ENCODE measurements at regions of chr1 and their contacts with region 1.

Region 1: GRCh38 chr1:236018885-236019453 is 45.9 kb downstream of the NID1 start:
- DNase-seq: peak; percentile 84 to 92 (median 86)
- ATAC-seq: peak; percentile 74 to 86 (median 82)
- H3K4me3 ChIP-seq: no peak overlapping the region
- H3K27ac ChIP-seq: peak overlapping the region; percentile 54 to 97 (median 84)
- H3K4me1 ChIP-seq: peaks cover 0 to 67% (median 26%) of the 10 kb centered on the region in 12 donors
- H3K27me3 ChIP-seq: no peaks in the 10 kb centered on the region
- CTCF ChIP-seq: no peak
- POLR2A ChIP-seq: no peak

Region 2: DNA sequence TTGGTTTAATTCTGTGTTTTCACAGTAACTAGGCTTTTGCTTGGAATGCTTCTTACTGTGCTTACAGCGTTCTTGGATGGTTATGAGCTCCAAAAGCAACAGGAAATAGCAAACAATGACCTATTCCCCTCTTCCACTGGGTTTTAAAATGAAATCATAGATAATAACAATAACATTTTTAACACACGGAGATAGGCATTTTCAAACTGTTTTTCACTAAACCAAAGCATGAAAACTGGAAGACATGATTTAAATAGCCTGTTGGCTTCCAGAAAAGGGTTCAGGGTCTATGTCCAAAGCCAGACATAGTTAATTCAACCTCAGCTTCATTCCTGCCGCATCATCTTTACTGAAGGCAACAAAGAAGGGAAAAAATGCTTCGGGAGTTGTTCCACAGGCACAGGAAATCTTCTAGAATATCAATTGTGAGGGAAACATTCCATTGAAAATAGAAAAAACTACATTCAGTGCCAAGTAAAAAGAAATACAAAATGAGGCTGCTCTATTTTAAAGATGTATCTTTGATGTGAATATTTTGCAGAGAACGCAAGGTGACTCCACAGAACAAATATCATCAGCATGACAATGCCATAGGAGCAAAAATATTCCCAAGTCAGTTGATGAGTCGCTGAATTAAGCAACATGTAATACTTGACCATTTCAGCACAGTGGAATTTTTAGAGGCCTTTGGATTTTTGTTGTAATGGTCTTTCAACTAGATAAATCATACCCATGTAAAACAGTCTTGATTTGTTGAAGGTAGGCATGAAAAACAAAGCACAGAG is 34.7 kb before region 1 on chr1:
- intact Hi-C with region 1: loop called in 1 of 10 experiments (anchors 5 kb)
- DNase-seq: no peak
- ATAC-seq: peak in 2 of 4 donors; percentile 33 to 70
- H3K4me3 ChIP-seq: peak overlapping the region in 1 of 12 donors; percentile 2
- H3K27ac ChIP-seq: peak overlapping the region; percentile 49 to 88 (median 67)
- H3K4me1 ChIP-seq: peaks cover 0 to 65% (median 42%) of the 10 kb centered on the region in 12 donors
- H3K27me3 ChIP-seq: no peaks in the 10 kb centered on the region
- CTCF ChIP-seq: no peak
- POLR2A ChIP-seq: no peak

Region 3: GRCh38 chr1:236058141-236058934 is 39.4 kb after region 1 on chr1:
- intact Hi-C with region 1: loop called in 2 of 10 experiments (anchors 5 kb)
- DNase-seq: no peak
- ATAC-seq: peak in 2 of 4 donors; percentile 16 to 19
- H3K4me3 ChIP-seq: peak overlapping the region in 7 of 12 donors; percentile 4 to 41 (median 10)
- H3K27ac ChIP-seq: peak overlapping the region in 8 of 12 donors; percentile 8 to 100 (median 46)
- H3K4me1 ChIP-seq: peaks cover 3 to 69% (median 49%) of the 10 kb centered on the region in 12 donors
- H3K27me3 ChIP-seq: no peaks in the 10 kb centered on the region
- CTCF ChIP-seq: no peak
- POLR2A ChIP-seq: no peak

Region 4: DNA sequence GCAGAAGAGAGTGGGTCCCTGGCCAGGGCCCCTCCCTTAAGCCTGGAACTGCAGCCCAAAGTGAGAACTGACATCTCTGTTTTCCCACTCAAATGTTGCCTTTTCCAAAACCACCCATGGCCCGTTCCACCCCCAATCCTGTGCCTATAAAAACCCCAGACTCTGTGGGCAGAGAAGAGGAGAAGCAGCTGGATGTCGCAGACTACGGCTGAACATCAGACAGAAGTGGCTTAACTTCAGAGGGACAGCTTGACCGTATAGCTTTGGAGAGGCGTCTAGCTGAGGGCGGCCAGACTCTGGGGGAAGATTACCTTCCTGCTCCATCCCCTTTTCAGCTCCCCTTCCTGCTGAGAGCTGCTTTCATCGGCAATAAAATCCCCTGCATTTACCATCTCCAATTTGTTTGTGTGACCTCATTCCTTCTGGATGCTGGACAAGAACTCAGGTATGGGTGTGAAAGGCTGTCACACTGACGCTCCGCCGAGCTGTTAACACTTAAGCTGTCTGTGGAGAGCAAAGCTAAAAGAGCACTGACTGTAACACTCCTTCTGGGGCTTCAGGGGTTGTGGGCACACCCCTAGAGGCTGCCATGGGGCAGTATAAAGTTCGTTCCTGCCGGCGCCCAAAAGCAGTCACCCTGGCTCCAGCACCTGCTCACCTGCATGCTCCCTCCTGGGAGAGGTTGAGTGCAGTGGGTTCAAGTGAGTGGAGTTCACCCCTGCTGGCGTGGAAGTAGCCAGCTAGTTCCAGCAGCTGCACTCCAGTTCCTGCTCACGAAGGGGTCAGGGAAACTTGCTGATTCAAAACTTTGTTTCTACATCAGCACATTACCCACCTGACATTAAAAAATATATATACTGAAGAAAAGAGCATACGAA is 282.4 kb after region 1 on chr1:
- intact Hi-C with region 1: no loop called
- DNase-seq: no peak
- ATAC-seq: no peak
- H3K4me3 ChIP-seq: no peak overlapping the region
- H3K27ac ChIP-seq: no peak overlapping the region
- H3K4me1 ChIP-seq: no peaks in the 10 kb centered on the region
- H3K27me3 ChIP-seq: no peaks in the 10 kb centered on the region
- CTCF ChIP-seq: no peak
- POLR2A ChIP-seq: no peak

Measured in heart left ventricle (tissue), 16 donors.